ENCODE measurements at regions of chr11 and their contacts with region 1.

Region 1: GRCh38 chr11:6251120-6251733 is 8.4 kb upstream of the CCKBR start:
- DNase-seq: peak; percentile 86
- H3K4me3 ChIP-seq: no peak overlapping the region
- H3K27ac ChIP-seq: peak overlapping the region in 3 of 4 donors; percentile 67 to 79 (median 74)
- H3K4me1 ChIP-seq: peaks cover 0 to 23% (median 15%) of the 10 kb centered on the region in 4 donors
- H3K27me3 ChIP-seq: no peaks in the 10 kb centered on the region
- CTCF ChIP-seq: peak; percentile 86 to 96 (median 87)
- EP300 ChIP-seq: no peak
- POLR2A ChIP-seq: no peak

Region 2: GRCh38 chr11:6234387-6235107 is 16.7 kb before region 1 on chr11 and contains the start of gene FHIP1B:
- intact Hi-C with region 1: loop called (anchors 2 kb)
- DNase-seq: peak; percentile 100
- H3K4me3 ChIP-seq: peak within 1 kb of the TSS; percentile 48 to 90 (median 70)
- H3K27ac ChIP-seq: peak within 1 kb of the TSS; percentile 85 to 91 (median 87)
- H3K4me1 ChIP-seq: peaks cover 0 to 27% (median 15%) of the 10 kb centered on the region in 4 donors
- H3K27me3 ChIP-seq: no peaks in the 10 kb centered on the region
- CTCF ChIP-seq: no peak
- EP300 ChIP-seq: no peak
- POLR2A ChIP-seq: peak; percentile 16 to 47
- total RNA-seq, gene FHIP1B: 21.6 to 66.0 (median 36.6) TPM

Region 3: GRCh38 chr11:6389921-6390724 is 138.9 kb after region 1 on chr11 and contains the start of gene SMPD1:
- intact Hi-C with region 1: no loop called
- DNase-seq: peak; percentile 96
- H3K4me3 ChIP-seq: peak within 1 kb of the TSS; percentile 78 to 96 (median 82)
- H3K27ac ChIP-seq: peak within 1 kb of the TSS; percentile 89 to 95 (median 90)
- H3K4me1 ChIP-seq: peaks cover 3 to 22% (median 17%) of the 10 kb centered on the region in 4 donors
- H3K27me3 ChIP-seq: no peaks in the 10 kb centered on the region
- CTCF ChIP-seq: no peak
- EP300 ChIP-seq: no peak
- POLR2A ChIP-seq: peak; percentile 67 to 71
- total RNA-seq, gene SMPD1: 17.1 to 36.8 (median 18.5) TPM